ENCODE measurements at regions of chr6 and their contacts with region 1.

Region 1: GRCh38 chr6:69729870-69730449 is 66.8 kb downstream of the LMBRD1 start:
- DNase-seq: no peak
- H3K4me3 ChIP-seq: no peak overlapping the region
- CTCF ChIP-seq: no peak

Region 2: GRCh38 chr6:69719602-69720193 is 10.3 kb before region 1 on chr6:
- CTCF ChIA-PET with region 1: interaction called, 15 read pairs
- POLR2A ChIA-PET with region 1: no interaction called
- DNase-seq: no peak
- H3K4me3 ChIP-seq: no peak overlapping the region
- CTCF ChIP-seq: peak; percentile 46